ENCODE measurements at regions of chr13 and their contacts with region 1.

Region 1: DNA sequence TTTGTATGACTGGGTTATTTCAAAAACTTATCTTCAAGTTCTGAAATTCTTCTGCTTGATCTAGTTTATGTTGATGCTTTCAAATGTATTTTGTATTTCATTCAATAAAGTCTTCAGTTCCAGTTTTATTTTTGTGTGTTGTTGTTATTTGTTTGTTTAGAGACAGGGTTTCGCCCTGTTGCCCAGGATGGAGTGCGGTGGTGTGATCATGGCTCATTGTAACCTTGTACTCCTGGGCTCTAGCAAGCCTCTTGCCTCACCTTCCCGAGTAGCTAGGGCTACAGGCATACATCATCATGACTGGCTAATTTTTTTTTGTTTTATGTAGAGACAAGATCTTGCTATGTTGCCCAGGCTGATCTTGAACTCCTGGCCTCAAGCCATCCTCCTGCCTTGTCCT is 40.3 kb upstream of the ARHGEF7 start:
- DNase-seq: no peak
- ATAC-seq: no peak
- H3K4me3 ChIP-seq: no peak overlapping the region
- H3K27ac ChIP-seq: no peak overlapping the region
- H3K4me1 ChIP-seq: no peaks in the 10 kb centered on the region
- H3K27me3 ChIP-seq: no peaks in the 10 kb centered on the region
- CTCF ChIP-seq: no peak
- POLR2A ChIP-seq: no peak

Region 2: DNA sequence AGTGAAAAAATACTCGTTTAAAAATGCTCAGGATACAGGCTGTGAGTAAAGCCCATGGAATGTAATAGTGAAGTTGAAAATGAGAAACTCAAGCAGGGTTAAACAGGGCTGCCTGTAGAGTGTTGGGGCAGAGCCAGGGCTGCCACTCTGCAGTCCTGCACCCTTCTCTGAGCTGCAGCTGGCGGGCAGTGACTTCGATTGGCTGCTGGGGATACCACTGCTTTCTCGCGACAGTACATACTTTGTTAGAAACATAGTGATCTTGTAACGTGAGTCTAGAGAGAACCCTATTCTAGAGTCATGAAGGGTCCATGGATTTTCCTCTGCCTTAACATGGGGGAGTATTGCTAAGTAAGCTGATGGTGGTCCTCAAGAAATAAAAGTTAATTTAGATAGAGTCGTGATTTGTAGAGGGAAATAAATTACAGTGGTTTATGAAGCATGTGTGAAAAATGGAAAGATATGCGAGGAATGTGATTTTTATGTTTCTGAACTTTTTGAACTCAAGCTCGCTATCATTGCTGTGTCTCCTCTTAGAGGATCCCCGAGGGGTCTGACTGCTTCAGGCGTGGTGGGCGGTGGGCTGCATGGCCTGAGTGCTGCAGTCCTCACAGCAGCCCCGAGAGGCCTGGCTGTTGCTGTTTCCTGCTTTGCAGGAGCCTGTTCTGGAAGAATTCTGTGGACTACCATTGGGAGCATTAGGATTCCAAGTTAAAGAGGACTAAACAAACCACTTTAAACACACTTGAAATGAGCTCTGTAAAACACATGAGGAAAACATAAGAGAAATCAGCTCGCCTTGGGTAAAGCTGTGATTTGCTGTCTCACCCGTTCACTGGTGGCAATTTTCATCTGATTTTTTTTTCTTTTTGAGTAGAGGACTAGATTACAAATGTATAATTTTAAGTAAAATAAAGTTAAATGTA is 136.0 kb after region 1 on chr13:
- in situ Hi-C with region 1: loop called in 1 of 4 experiments (anchors 5 kb)
- intact Hi-C with region 1: no loop called
- DNase-seq: peak in 1 of 2 donors; percentile 42
- ATAC-seq: peak in 1 of 2 donors; percentile 47
- H3K4me3 ChIP-seq: peak overlapping the region in 3 of 4 donors; percentile 1 to 8 (median 6)
- H3K27ac ChIP-seq: peak overlapping the region; percentile 37 to 83 (median 74)
- H3K4me1 ChIP-seq: peaks cover 77 to 89% of the 10 kb centered on the region in 2 donors
- H3K27me3 ChIP-seq: no peaks in the 10 kb centered on the region
- CTCF ChIP-seq: no peak
- POLR2A ChIP-seq: no peak

Measured in gastrocnemius medialis (tissue), 4 donors.